ENCODE measurements at regions of chr14 and their contacts with region 1.

Region 1: DNA sequence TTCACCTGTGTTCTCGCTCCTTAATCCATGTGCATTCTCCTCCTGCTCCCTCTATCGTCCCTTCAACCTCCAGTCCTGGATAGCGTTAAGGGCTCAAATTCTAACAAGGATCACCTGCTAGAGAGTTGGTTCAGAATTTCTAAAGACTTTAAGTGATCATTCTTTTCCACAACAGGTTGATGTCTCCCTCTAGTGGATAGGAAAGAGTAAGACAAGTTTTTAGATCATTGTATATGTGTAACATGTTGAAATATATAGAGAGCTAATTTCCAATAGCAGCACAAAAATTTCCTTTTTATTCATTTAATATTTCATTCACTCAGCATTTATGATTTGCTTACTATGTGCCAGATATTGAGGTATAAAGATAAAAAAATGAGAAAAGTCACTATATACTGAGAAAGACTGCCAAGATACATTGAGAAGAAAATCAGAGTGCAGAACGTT is 9.3 kb upstream of the ESR2 start:
- DNase-seq: no peak
- H3K4me3 Mint-ChIP-seq: no peak overlapping the region
- H3K27ac Mint-ChIP-seq: no peak overlapping the region
- H3K4me1 Mint-ChIP-seq: peaks cover 8% of the 10 kb centered on the region
- H3K27me3 Mint-ChIP-seq: peaks cover 12% of the 10 kb centered on the region

Region 2: DNA sequence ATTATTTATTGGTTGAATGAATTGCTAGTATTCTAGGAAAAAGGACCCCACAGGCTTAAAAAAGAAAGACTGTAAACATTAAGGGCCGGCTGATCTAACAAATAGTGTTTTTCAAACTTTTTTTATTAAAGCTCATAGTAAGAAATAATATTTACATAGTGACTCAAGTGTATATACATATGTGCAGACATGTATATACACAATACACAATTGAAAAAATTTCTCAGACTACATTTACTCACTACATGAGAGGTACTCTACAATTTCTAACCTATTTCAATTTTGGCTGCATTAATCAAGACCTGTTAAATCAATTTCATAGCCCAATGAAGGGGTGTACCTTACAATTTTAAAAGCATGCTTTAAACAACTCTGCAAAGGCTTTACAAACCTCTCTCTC is 1275.8 kb before region 1 on chr14:
- intact Hi-C with region 1: no loop called
- DNase-seq: no peak
- H3K4me3 Mint-ChIP-seq: no peak overlapping the region
- H3K27ac Mint-ChIP-seq: no peak overlapping the region
- H3K4me1 Mint-ChIP-seq: no peaks in the 10 kb centered on the region
- H3K27me3 Mint-ChIP-seq: no peaks in the 10 kb centered on the region

Region 3: GRCh38 chr14:63800651-63801375 is 502.7 kb before region 1 on chr14:
- intact Hi-C with region 1: loop called (anchors 2 kb)
- DNase-seq: no peak
- H3K4me3 Mint-ChIP-seq: no peak overlapping the region
- H3K27ac Mint-ChIP-seq: no peak overlapping the region
- H3K4me1 Mint-ChIP-seq: peaks cover 4% of the 10 kb centered on the region
- H3K27me3 Mint-ChIP-seq: peaks cover 8% of the 10 kb centered on the region

Region 4: DNA sequence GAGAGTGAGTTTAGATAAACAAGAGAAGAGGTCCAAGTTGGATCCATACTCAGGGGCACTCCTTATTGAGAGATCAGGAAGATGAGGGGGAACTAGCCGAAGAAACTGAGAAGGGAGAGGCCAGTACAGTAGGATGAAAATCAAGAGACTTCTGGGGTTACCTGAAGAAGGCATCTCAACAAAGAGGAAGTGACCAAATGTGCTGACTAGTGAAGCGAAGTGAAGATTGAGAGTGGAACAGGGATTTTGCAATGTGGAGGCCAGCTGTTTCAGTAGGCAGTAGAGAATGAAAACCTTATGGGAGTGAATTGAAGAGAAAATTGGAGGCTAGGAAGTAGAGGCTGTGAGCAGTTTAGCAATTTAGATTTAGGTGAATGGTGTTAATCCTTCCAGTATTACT is 297.7 kb before region 1 on chr14:
- intact Hi-C with region 1: loop called (anchors 1 kb)
- DNase-seq: no peak
- H3K4me3 Mint-ChIP-seq: no peak overlapping the region
- H3K27ac Mint-ChIP-seq: no peak overlapping the region
- H3K4me1 Mint-ChIP-seq: no peaks in the 10 kb centered on the region
- H3K27me3 Mint-ChIP-seq: no peaks in the 10 kb centered on the region

Region 5: DNA sequence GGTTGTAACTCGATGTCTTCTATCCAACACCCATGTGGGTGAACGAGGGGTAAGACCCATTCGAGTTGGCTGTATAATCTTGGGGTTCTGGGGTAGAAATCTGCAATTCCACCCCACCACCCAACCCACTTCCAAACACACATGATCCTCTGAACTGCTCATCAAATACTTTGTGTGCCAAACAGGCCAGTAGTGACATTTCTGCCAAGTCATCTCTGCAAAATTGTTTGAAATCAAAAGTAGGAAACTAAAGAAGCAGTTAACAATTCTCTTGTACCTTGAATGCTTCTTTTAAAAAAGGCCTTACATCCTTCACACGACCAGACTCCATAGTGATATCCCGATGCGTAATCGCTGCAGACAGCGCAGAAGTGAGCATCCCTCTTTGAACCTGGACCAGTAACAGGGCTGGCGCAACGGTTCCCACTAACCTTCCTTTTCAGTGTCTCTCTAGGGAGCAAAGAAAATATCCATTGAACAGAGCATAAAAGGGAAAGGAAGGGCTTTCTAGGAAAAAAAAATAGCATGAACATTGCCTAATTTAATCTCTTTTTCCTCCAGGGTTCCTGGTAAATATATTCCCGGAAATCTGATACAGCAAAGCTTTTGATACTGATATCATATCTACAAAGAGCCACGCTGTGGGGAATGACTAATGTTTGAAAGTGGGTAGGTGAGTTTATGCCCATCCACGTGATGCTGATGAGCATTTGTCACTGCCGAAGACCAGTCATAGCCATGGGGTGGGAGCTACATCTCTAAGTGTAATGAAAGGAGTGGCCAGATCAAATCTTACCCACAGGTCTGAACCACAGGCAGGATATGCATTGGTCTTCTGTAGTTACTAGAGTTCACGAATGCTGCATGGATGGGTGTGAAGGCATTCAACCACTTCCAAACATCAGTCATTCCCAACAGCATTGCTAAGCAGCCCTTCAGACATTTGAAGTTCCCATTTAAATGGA is 23.5 kb before region 1 on chr14:
- intact Hi-C with region 1: no loop called
- DNase-seq: peak; percentile 36
- H3K4me3 Mint-ChIP-seq: no peak overlapping the region
- H3K27ac Mint-ChIP-seq: peak overlapping the region; percentile 9
- H3K4me1 Mint-ChIP-seq: peaks cover 31% of the 10 kb centered on the region
- H3K27me3 Mint-ChIP-seq: peaks cover 2% of the 10 kb centered on the region